Panc1 (cell line): ENCODE measurements at regions of chr4 and their contacts with region 1.

Region 1: GRCh38 chr4:152972821-152973628 is 36.9 kb downstream of the FHDC1 start:
- DNase-seq: no peak
- ATAC-seq: no peak
- H3K4me3 ChIP-seq: no peak overlapping the region
- H3K27ac ChIP-seq: no peak overlapping the region
- H3K4me1 ChIP-seq: no peaks in the 10 kb centered on the region
- H3K27me3 ChIP-seq: no peaks in the 10 kb centered on the region
- CTCF ChIP-seq: no peak

Region 2: DNA sequence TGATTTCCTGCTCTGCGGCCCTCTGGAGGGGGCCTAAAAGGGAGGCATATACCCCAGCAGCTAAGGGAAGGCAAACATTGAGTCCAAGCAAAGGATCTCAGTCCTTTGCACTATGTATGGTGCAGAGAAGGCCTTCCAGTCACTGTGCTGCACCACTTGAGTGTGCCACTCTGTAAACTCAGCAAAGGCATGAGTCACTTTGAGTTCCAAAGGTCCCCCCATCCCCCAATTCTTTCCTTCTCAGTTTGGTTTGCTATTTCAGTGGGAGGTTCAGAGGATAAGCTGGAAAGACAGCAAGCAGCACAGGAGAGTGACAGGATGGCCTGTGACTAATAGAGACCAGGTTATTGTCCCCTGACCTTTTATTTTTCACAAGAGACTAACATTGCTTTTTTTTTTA is 94.4 kb after region 1 on chr4:
- CTCF ChIA-PET with region 1: no interaction called
- POLR2A ChIA-PET with region 1: no interaction called
- in situ Hi-C with region 1: no loop called
- intact Hi-C with region 1: no loop called
- DNase-seq: no peak
- ATAC-seq: no peak
- H3K4me3 ChIP-seq: no peak overlapping the region
- H3K27ac ChIP-seq: no peak overlapping the region
- H3K4me1 ChIP-seq: no peaks in the 10 kb centered on the region
- H3K27me3 ChIP-seq: no peaks in the 10 kb centered on the region
- CTCF ChIP-seq: no peak

Region 3: DNA sequence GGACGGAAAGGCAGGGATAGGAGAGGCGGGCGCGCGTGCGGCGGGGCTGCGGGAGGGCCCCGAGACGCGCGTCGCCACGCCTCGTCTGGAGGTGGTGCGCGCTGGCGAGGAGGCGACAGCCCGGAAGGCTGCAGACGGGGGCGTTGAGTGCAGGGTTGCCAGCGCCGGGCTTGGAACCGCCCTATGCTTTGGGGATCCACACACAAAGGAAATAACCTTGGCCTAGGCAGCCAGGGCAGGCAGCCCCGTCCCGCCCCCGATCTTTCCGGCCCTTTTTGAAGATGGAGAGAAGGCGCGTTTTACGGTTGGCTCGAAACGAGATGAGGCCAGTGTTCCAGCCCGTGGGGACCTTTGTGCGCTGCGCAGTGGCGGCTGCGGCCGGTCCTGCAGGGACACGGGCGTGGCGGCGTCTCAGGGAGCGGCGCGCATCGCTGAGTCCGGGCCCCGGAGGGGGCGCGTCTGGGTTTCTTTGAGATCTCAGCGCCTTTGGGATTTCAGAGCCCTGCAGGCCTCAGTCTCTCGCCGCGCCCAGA is 180.4 kb after region 1 on chr4:
- CTCF ChIA-PET with region 1: no interaction called
- POLR2A ChIA-PET with region 1: interaction called, 24 read pairs
- in situ Hi-C with region 1: no loop called
- intact Hi-C with region 1: no loop called
- DNase-seq: no peak
- ATAC-seq: peak; percentile 94
- H3K4me3 ChIP-seq: peak overlapping the region; percentile 52 to 59
- H3K27ac ChIP-seq: peak overlapping the region; percentile 63
- H3K4me1 ChIP-seq: peaks cover 7% of the 10 kb centered on the region
- H3K27me3 ChIP-seq: no peaks in the 10 kb centered on the region
- CTCF ChIP-seq: no peak